ENCODE measurements at regions of chr6 and their contacts with region 1.

Region 1: GRCh38 chr6:139134817-139135581 is at the start of gene HECA:
- DNase-seq: peak; percentile 99
- H3K4me3 Mint-ChIP-seq: peak within 1 kb of the TSS; percentile 95
- H3K27ac Mint-ChIP-seq: peak within 1 kb of the TSS; percentile 99
- H3K4me1 Mint-ChIP-seq: peaks cover 49% of the 10 kb centered on the region
- H3K27me3 Mint-ChIP-seq: no peaks in the 10 kb centered on the region
- total RNA-seq, gene HECA: 61.1 to 61.2 TPM

Region 2: GRCh38 chr6:137903933-137904821 is 1230.8 kb before region 1 on chr6:
- CTCF ChIA-PET with region 1: no interaction called
- intact Hi-C with region 1: loop called (anchors 10 kb)
- DNase-seq: peak; percentile 77
- H3K4me3 Mint-ChIP-seq: peak overlapping the region; percentile 71
- H3K27ac Mint-ChIP-seq: peak overlapping the region; percentile 100
- H3K4me1 Mint-ChIP-seq: peaks cover 71% of the 10 kb centered on the region
- H3K27me3 Mint-ChIP-seq: no peaks in the 10 kb centered on the region

Region 3: GRCh38 chr6:138773177-138774091 is 361.6 kb before region 1 on chr6 and contains the start of gene CCDC28A:
- CTCF ChIA-PET with region 1: no interaction called
- intact Hi-C with region 1: loop called (anchors 1 kb)
- DNase-seq: peak; percentile 97
- H3K4me3 Mint-ChIP-seq: peak within 1 kb of the TSS; percentile 98
- H3K27ac Mint-ChIP-seq: peak within 1 kb of the TSS; percentile 100
- H3K4me1 Mint-ChIP-seq: peaks cover 30% of the 10 kb centered on the region
- H3K27me3 Mint-ChIP-seq: no peaks in the 10 kb centered on the region
- total RNA-seq, gene CCDC28A: 18.9 to 19.2 TPM

Region 4: DNA sequence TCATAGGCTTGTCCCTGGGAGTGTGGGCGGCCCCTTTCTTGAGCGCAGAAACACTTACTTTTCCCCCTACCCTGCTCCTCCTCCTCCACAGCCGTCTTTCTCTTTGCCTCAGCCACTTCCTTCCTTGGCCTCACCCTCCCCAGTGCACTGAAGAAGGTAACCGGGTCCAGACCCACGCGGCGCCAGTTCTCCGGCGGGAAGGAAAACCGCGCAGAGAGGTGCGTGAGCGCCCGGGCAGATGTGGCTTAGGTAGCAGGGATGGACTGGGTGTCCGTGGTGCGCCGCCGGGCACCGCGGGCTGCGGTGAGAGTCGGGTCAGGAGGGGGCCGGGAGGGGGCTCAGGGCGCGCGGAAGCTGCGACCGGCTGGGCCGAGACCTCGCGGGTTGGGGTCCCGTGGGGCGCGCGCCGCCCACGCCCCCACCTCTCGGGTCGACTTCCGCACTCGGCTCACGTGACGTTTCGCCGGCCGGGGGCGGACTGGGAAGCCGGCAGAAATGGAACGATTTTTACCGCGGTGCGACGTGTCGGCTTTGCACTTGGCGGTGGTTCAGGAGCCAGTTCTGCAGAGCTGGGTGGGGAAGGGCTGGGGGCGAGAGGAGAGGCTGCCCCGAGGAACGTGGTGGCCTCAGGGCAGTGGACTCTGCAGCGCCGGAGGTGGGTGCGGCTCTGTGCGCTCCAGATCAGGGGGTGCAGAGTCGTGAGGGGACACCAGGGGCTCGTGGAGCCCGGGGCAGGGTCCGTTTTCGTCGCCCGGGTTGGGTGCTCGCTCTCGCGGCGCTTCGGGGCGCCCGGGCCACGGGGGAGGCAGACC is 106.1 kb before region 1 on chr6 and contains the start of gene ABRACL:
- CTCF ChIA-PET with region 1: interaction called, 3 read pairs
- intact Hi-C with region 1: loop called (anchors 1 kb)
- DNase-seq: peak; percentile 92
- H3K4me3 Mint-ChIP-seq: no peak within 1 kb of the TSS
- H3K27ac Mint-ChIP-seq: peak within 1 kb of the TSS; percentile 95
- H3K4me1 Mint-ChIP-seq: peaks cover 18% of the 10 kb centered on the region
- H3K27me3 Mint-ChIP-seq: no peaks in the 10 kb centered on the region
- total RNA-seq, gene ABRACL: 185 to 190 TPM

Region 5: DNA sequence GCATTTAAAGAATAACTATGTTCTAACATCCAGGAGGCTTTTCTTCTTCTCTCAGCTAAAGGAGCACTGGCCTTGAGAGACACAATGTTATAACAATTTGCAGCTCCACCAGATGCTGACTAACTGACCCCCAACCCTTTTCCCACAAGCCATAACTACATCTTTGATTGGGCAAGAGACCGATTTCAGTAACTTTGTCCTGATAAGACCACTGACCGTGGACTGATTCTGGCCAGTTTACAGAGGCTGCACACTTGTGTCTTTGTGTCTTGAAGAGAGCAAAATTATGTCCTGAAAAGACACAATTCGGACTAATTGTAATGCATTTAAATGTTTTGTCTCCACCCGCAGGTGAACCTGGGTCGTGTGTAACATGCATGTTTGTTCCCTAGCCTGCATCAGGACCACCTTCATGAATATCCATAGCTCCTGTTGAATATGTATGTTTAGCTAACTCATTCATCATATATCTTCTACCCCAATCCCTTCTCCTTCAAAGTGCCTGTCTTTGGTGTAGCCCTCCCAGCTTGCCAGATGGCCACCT is 84.2 kb before region 1 on chr6:
- CTCF ChIA-PET with region 1: no interaction called
- intact Hi-C with region 1: no loop called
- DNase-seq: no peak
- H3K4me3 Mint-ChIP-seq: no peak overlapping the region
- H3K27ac Mint-ChIP-seq: no peak overlapping the region
- H3K4me1 Mint-ChIP-seq: peaks cover 7% of the 10 kb centered on the region
- H3K27me3 Mint-ChIP-seq: no peaks in the 10 kb centered on the region

Region 6: DNA sequence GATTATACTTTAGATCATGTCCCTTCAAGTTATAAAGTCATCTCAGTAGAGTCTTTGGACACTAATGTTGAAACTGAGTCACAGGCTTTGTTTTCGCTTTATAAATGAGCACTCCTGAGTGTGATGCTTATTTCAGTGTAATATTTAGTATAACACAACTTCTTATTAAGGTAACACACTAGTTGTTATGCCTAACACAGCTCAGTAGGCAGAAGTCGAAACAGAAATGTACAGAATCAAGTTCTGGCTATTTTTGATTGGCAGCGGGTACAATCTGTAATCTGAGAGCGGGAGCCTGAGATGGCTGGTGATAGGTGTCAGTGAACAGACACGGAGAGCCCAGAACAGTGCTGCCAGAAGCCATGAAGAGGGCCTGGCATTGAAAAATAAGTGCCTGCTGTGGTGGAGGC is 11.3 kb after region 1 on chr6:
- CTCF ChIA-PET with region 1: interaction called, 16 read pairs
- intact Hi-C with region 1: loop called (anchors 1 kb)
- DNase-seq: no peak
- H3K4me3 Mint-ChIP-seq: peak overlapping the region; percentile 61
- H3K27ac Mint-ChIP-seq: peak overlapping the region; percentile 95
- H3K4me1 Mint-ChIP-seq: peaks cover 91% of the 10 kb centered on the region
- H3K27me3 Mint-ChIP-seq: no peaks in the 10 kb centered on the region

Region 7: GRCh38 chr6:139161817-139162284 is 26.9 kb after region 1 on chr6:
- CTCF ChIA-PET with region 1: interaction called, 3 read pairs
- intact Hi-C with region 1: loop called (anchors 1 kb)
- DNase-seq: peak; percentile 88
- H3K4me3 Mint-ChIP-seq: peak overlapping the region; percentile 39
- H3K27ac Mint-ChIP-seq: peak overlapping the region; percentile 92
- H3K4me1 Mint-ChIP-seq: peaks cover 91% of the 10 kb centered on the region
- H3K27me3 Mint-ChIP-seq: no peaks in the 10 kb centered on the region

Region 8: DNA sequence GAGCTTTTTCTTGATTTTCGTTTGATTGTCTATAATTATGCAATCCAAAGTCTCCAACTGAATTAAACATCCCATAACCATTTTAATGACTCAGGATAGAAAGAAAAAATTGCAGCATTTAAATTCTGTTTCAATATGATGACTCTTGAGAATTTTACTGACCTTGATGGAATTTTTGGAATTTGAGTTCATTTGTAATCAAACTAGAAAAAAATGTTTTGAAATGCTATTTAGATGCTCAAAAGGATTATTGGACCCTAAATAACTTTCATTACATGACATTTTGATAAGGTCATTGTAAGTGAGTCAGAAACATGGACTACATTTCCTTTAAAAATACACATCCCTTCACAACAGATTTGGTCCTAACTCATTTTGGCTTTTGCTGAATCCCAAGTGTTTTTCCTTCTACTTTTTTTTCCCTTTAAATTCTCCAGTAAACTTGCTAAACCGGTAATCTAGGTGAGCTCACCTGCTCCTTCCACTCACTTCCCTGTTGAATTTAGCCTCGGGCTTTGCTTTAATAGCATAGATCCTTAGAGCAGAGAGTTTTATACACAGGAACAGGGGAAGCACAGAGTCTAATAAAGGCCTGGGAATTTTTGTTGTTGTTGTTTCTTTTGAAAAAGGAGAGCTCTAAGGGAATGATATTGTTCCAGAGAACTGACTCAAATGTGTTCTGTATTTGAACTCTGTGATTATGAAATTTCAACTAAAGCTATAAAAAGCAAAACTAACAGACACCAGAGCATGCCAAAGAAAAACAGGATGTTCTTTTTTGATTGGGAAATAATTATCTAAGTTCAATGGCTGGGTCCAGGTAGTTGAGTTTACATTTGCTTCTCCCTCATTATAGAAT is 1327.7 kb after region 1 on chr6:
- CTCF ChIA-PET with region 1: no interaction called
- intact Hi-C with region 1: no loop called
- DNase-seq: no peak
- H3K4me3 Mint-ChIP-seq: no peak overlapping the region
- H3K27ac Mint-ChIP-seq: no peak overlapping the region
- H3K4me1 Mint-ChIP-seq: no peaks in the 10 kb centered on the region
- H3K27me3 Mint-ChIP-seq: peaks cover 15% of the 10 kb centered on the region

Measured in activated naive CD4-positive, alpha-beta T cell treated with anti-CD3 and anti-CD28 coated beads for 36 hours (primary cell).